H1 (cell line): ENCODE measurements at regions of chr6 and their contacts with region 1.

Region 1: DNA sequence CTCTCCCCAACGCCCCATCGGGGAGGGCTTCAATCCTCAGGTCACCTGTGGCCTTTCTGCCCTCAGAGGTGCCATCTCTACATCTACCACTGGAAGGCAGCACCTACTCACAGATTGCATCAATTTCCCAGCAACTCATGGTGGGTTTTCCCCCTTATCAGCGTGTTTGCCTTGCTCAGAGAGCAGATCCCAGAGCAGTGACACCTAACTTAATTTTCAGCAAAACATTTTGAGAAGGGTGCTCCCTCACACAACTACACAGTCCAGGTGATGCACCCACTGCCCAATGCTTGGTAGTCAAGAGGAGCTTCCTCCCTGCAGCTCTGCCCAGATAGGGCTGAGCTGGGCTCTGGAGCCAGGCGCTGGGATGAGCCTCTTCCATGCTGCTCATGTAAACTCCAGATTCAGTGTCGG is 48.2 kb downstream of the PLG start:
- DNase-seq: peak; percentile 38 to 76
- H3K4me3 ChIP-seq: peak overlapping the region in 2 of 4 experiments; percentile 2 to 44; a peak in 2 of 8 replicates
- H3K27ac ChIP-seq: no peak overlapping the region
- H3K4me1 ChIP-seq: no peaks in the 10 kb centered on the region
- H3K27me3 ChIP-seq: no peaks in the 10 kb centered on the region
- CTCF ChIP-seq: peak; percentile 78 to 99 (median 91)
- EP300 ChIP-seq: no peak
- POLR2A ChIP-seq: no peak
- RAD21 ChIP-seq: peak; percentile 99

Region 2: DNA sequence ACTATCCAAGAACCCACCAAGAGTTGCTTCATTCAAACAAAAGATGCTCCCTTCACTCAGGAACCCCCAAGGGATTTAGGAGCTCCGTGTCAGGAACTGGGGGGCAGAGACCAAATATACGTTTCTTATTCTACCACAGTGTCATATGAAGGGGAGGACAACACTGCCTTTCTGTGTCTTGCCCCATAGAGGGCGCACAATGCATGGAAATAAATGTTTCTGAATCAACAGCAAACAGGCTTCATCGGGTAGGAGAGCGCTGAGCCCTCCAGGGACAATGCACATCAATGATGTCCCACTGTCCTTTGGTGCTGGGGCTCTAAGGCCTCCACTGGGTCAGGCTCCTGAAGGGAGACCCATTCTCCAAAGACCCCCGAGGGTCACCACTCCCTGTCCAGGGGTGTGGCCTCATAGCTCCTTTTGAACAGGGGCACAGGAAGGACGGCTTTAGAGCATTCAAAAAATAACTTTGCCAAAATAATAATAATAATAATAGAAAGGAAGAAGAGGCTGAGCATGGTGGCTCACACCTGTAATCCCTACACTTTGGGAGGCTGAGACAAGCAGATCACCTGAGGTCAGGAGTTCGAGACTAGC is 17.1 kb before region 1 on chr6:
- CTCF ChIA-PET with region 1: interaction called, 27 read pairs
- POLR2A ChIA-PET with region 1: no interaction called
- DNase-seq: peak in 1 of 2 experiments; percentile 48
- H3K4me3 ChIP-seq: no peak overlapping the region
- H3K27ac ChIP-seq: no peak overlapping the region
- H3K4me1 ChIP-seq: no peaks in the 10 kb centered on the region
- H3K27me3 ChIP-seq: no peaks in the 10 kb centered on the region; a peak in 1 of 7 replicates
- CTCF ChIP-seq: peak; percentile 11 to 88 (median 65)
- EP300 ChIP-seq: no peak
- POLR2A ChIP-seq: no peak
- RAD21 ChIP-seq: peak; percentile 65 to 76

Region 3: GRCh38 chr6:160766989-160767660 is 16.8 kb after region 1 on chr6:
- CTCF ChIA-PET with region 1: interaction called, 14 read pairs
- POLR2A ChIA-PET with region 1: no interaction called
- DNase-seq: peak; percentile 46 to 87
- H3K4me3 ChIP-seq: peak overlapping the region; percentile 39 to 70 (median 50)
- H3K27ac ChIP-seq: no peak overlapping the region
- H3K4me1 ChIP-seq: no peaks in the 10 kb centered on the region
- H3K27me3 ChIP-seq: peaks cover 0 to 6% (median 4%) of the 10 kb centered on the region in 4 experiments; a peak in 3 of 7 replicates
- CTCF ChIP-seq: peak; percentile 85 to 89 (median 88)
- EP300 ChIP-seq: no peak
- POLR2A ChIP-seq: no peak
- RAD21 ChIP-seq: peak; percentile 72 to 73

Region 4: GRCh38 chr6:160992061-160992979 is 242.0 kb after region 1 on chr6:
- CTCF ChIA-PET with region 1: interaction called, 10 read pairs
- POLR2A ChIA-PET with region 1: interaction called, 3 read pairs
- DNase-seq: peak in 1 of 2 experiments; percentile 71
- H3K4me3 ChIP-seq: peak overlapping the region; percentile 80 to 91 (median 86)
- H3K27ac ChIP-seq: peak overlapping the region; percentile 81
- H3K4me1 ChIP-seq: peaks cover 0 to 6% (median 0%) of the 10 kb centered on the region in 4 experiments; a peak in 1 of 7 replicates
- H3K27me3 ChIP-seq: no peaks in the 10 kb centered on the region; a peak in 1 of 7 replicates
- CTCF ChIP-seq: peak; percentile 10 to 67 (median 55)
- EP300 ChIP-seq: no peak
- POLR2A ChIP-seq: peak in 1 of 2 experiments; percentile 68; a peak in 2 of 3 replicates
- RAD21 ChIP-seq: peak; percentile 67 to 70